ENCODE measurements at regions of chr19 and their contacts with region 1.

Region 1: DNA sequence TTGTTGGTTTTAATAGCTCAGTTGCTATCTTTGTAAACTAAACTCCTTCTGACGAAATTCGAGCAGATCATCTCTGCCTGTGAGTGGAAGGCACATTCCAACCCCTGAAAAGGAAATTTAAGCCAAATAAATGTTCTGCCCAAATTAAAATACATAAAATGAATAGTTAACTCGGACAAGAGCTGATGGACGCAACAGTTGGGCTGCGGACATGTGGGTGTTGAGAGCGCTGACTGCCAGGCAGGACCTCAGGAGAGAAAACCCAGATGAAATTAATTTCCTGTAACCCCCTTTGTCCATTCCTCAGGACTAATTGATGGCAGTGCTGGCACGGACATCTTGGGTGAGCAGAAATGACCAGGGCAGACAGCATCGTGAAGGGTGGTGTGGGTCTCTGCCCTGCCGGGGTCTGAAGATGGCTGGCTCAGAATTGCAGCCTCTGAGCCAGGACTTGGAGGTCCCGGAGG is 86.5 kb downstream of the TSHZ3 start:
- DNase-seq: no peak
- H3K4me3 ChIP-seq: no peak overlapping the region
- H3K27ac ChIP-seq: no peak overlapping the region
- H3K4me1 ChIP-seq: no peaks in the 10 kb centered on the region; a peak in 3 of 7 replicates
- H3K27me3 ChIP-seq: no peaks in the 10 kb centered on the region
- CTCF ChIP-seq: no peak
- EP300 ChIP-seq: no peak
- POLR2A ChIP-seq: no peak
- RAD21 ChIP-seq: no peak

Region 2: DNA sequence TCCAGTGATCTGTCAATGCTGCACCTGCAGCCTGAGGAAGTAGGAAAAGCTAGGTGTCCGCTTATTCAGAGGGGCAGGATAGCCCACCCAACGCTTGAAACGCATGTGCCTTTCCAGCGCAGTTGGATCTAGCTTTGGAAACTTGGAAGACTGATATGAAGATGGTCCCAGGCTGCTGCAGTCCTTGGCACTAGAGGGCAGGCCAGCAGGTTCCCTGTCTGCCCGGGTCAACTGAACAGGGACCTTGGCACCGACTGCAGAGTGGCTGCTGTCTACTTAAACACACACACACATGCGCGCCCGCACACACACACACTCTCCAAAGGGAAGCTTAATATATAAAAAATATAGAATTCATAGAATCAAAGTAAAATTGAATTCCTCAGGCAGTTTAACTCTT is 13.5 kb before region 1 on chr19:
- CTCF ChIA-PET with region 1: interaction called, 19 read pairs
- POLR2A ChIA-PET with region 1: no interaction called
- DNase-seq: no peak
- H3K4me3 ChIP-seq: no peak overlapping the region
- H3K27ac ChIP-seq: no peak overlapping the region
- H3K4me1 ChIP-seq: peaks cover 0 to 3% (median 0%) of the 10 kb centered on the region in 4 experiments; a peak in 1 of 7 replicates
- H3K27me3 ChIP-seq: no peaks in the 10 kb centered on the region
- CTCF ChIP-seq: peak in 2 of 3 experiments; percentile 26 to 37; a peak in 2 of 4 replicates
- EP300 ChIP-seq: no peak
- POLR2A ChIP-seq: no peak
- RAD21 ChIP-seq: peak; percentile 20 to 43; a peak in 2 of 4 replicates

Region 3: GRCh38 chr19:31285744-31286143 is 23.0 kb after region 1 on chr19:
- CTCF ChIA-PET with region 1: no interaction called
- POLR2A ChIA-PET with region 1: no interaction called
- DNase-seq: no peak
- H3K4me3 ChIP-seq: no peak overlapping the region
- H3K27ac ChIP-seq: no peak overlapping the region
- H3K4me1 ChIP-seq: peaks cover 0 to 3% (median 0%) of the 10 kb centered on the region in 4 experiments; a peak in 1 of 7 replicates
- H3K27me3 ChIP-seq: no peaks in the 10 kb centered on the region
- CTCF ChIP-seq: no peak
- EP300 ChIP-seq: no peak
- POLR2A ChIP-seq: no peak
- RAD21 ChIP-seq: no peak

Region 4: DNA sequence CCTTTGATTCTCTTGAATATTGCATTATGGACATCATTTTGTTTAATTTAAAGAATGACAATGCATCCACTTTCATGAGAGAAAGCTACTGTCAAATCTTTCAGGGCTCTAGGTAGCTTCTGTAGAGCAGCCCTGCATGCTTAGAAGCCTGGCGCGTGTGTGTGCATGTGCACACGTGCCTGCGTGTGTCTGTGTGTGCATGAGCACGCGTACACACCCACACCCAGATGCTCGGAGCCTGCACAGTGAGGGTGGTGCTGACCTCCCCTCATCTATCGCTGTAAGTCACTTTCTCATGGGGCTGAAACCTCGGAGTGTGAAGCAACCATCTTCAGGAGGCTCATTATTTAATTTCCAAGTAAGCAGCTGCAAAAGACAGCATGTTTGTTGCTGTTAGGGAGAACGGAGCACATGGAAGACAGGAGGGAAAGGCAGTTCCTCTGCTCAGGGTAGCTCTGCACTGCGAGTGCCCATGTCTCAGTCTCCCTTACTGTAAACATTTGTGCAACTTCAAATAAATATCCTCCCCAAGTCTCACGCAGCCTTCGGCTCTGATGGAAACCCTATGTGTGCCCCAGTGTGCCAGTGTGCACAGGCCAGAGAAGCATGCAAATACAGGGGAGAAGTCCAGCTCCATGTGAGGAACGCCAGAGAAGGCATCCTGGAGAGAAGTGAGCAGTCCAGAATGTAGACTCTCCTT is 63.7 kb after region 1 on chr19:
- CTCF ChIA-PET with region 1: no interaction called
- POLR2A ChIA-PET with region 1: no interaction called
- DNase-seq: no peak
- H3K4me3 ChIP-seq: no peak overlapping the region
- H3K27ac ChIP-seq: no peak overlapping the region
- H3K4me1 ChIP-seq: peaks cover 0 to 9% (median 0%) of the 10 kb centered on the region in 4 experiments; a peak in 2 of 7 replicates
- H3K27me3 ChIP-seq: no peaks in the 10 kb centered on the region
- CTCF ChIP-seq: no peak
- EP300 ChIP-seq: no peak
- POLR2A ChIP-seq: no peak
- RAD21 ChIP-seq: no peak

Measured in H1 (cell line).